Activated B cell treated with CpG ODN at 0.5 μM for 24 hours (primary cell): ENCODE measurements at regions of chr6 and their contacts with region 1.

Region 1: DNA sequence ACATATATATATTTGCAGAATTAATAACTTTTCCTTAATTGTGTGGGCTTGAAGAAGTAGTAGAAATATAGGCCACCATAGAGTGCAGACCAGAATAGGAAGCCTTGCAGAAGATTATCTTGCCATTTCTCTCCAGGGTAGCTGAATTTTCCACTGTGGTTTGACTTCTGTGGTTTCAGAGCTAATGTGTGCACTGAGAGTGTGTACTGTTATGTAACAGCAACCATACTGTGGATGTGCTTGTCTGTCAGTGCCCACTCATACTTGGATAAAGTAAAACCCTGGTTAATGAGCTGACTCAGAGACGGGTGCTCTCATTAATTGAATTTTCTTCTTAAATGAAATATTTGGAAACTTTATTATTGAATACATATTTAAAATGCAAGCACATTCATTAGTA is 57.2 kb downstream of the CEP43 start:
- DNase-seq: no peak
- ATAC-seq: peak; percentile 93
- H3K4me3 Mint-ChIP-seq: no peak overlapping the region
- H3K27ac Mint-ChIP-seq: no peak overlapping the region
- H3K4me1 Mint-ChIP-seq: peaks cover 23% of the 10 kb centered on the region
- H3K27me3 Mint-ChIP-seq: no peaks in the 10 kb centered on the region
- CTCF ChIP-seq: no peak

Region 2: DNA sequence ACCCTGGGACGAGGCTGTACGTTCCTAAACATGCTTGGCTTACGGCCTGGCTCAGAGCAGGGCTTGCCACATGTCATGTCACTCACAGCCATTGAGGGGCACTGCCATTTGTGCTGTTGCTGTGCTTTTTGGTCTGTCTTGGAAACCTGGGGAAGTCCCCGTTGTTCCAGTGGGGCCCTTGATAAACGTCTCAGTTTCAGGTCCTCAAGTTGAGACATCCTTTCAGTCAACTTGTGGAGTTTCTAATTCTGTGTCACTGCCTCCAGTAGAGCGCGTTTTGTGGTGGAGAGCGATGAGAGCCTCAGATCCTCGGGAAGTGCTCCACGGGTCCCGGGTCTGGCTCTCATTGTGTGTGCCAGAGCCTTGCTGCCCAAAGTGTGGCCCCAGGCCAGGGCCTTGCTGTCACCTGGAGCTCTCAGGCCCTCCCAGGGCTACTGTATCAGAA is 23.5 kb after region 1 on chr6:
- CTCF ChIA-PET with region 1: no interaction called
- POLR2A ChIA-PET with region 1: interaction called, 3 read pairs
- intact Hi-C with region 1: loop called (anchors 2 kb)
- DNase-seq: peak; percentile 65
- ATAC-seq: peak; percentile 99
- H3K4me3 Mint-ChIP-seq: peak overlapping the region; percentile 54
- H3K27ac Mint-ChIP-seq: peak overlapping the region; percentile 91
- H3K4me1 Mint-ChIP-seq: peaks cover 52% of the 10 kb centered on the region
- H3K27me3 Mint-ChIP-seq: no peaks in the 10 kb centered on the region
- CTCF ChIP-seq: peak; percentile 51

Region 3: GRCh38 chr6:167212713-167213005 is 156.3 kb after region 1 on chr6:
- CTCF ChIA-PET with region 1: no interaction called
- POLR2A ChIA-PET with region 1: no interaction called
- intact Hi-C with region 1: no loop called
- DNase-seq: no peak
- ATAC-seq: no peak
- H3K4me3 Mint-ChIP-seq: no peak overlapping the region
- H3K27ac Mint-ChIP-seq: no peak overlapping the region
- H3K4me1 Mint-ChIP-seq: no peaks in the 10 kb centered on the region
- H3K27me3 Mint-ChIP-seq: peaks cover 14% of the 10 kb centered on the region
- CTCF ChIP-seq: no peak